ENCODE measurements at regions of chr22 and their contacts with region 1.

Region 1: DNA sequence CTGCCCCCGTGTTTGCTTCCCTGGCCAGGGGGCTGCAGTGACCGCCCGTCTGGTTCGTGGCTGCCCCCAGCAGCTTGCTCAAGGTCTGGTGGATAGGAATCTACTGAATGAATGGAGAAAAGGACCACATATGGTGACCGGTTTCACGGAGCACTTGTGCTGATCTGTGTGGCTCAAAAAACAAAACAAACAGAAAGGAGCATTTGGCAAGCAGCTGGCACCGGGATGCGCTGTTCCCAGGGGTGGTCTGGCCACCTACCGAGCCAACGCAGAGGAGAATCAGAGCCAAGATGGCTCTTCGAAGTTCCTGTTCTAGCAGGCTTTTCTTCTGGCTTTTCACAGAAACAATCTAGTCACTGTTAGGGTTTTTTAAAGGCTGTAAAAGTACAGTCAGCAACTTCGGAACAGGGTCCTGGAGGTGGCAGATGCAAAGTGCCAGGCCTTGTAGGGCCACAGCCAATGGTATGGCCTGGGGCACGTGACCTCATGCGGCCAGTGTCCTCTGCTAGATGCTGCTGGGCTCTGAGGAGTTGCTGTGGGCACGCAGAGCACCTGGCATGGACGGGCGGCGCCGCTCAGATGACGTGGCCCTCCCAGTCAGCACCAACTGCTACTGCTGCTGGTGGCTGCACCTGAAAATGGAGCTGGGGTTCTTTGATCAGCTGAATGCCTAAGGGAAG is 27.3 kb upstream of the PACSIN2 start:
- DNase-seq: no peak
- ATAC-seq: no peak
- H3K4me3 ChIP-seq: no peak overlapping the region
- H3K27ac ChIP-seq: no peak overlapping the region
- H3K4me1 ChIP-seq: no peaks in the 10 kb centered on the region
- H3K27me3 ChIP-seq: no peaks in the 10 kb centered on the region
- CTCF ChIP-seq: no peak

Region 2: DNA sequence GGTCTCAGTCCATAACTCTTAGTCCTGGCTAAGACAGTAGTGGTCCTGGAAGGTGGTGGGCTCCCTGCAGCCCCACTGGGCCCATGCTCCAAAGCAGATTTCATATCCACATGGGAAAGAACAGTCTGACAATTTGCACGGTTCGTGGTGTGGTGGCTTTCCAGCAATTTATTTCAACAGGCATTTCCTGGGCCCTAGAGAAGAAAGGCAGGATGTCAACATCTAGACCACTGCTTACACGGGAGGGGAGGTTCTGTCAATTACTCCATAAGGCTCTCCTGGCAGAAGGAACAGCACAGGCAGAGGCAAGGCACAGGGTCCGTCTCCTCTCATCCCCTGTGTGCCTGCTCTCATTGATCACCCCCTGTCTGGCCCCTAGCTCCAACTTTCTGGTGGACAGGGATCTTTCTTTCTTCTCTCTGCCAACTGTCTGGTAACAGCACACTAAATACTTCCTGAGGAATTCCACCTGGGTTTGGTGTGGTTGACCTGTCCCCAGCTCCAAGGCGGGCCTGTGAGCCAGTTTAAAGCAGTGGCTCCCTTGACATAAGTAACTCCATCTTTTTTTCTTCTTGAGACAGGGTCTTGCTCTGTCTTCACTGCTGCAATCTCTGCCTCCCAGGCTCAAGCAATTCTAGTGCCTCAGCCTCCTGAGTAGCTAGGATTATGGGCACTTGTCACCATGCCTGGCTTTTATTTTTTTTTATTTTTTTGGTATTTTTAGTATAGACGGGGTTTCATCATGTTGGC is 316.5 kb before region 1 on chr22:
- CTCF ChIA-PET with region 1: no interaction called
- POLR2A ChIA-PET with region 1: interaction called, 13 read pairs
- in situ Hi-C with region 1: no loop called
- intact Hi-C with region 1: no loop called
- DNase-seq: no peak
- ATAC-seq: no peak
- H3K4me3 ChIP-seq: no peak overlapping the region
- H3K27ac ChIP-seq: no peak overlapping the region
- H3K4me1 ChIP-seq: no peaks in the 10 kb centered on the region
- H3K27me3 ChIP-seq: no peaks in the 10 kb centered on the region
- CTCF ChIP-seq: no peak

Region 3: GRCh38 chr22:43616645-43617044 is 574.4 kb after region 1 on chr22:
- CTCF ChIA-PET with region 1: no interaction called
- POLR2A ChIA-PET with region 1: no interaction called
- in situ Hi-C with region 1: no loop called
- intact Hi-C with region 1: no loop called
- DNase-seq: no peak
- ATAC-seq: no peak
- H3K4me3 ChIP-seq: no peak overlapping the region
- H3K27ac ChIP-seq: no peak overlapping the region
- H3K4me1 ChIP-seq: no peaks in the 10 kb centered on the region
- H3K27me3 ChIP-seq: no peaks in the 10 kb centered on the region; the same call in 1 of the 2 replicates
- CTCF ChIP-seq: no peak